Activated T-helper 1 cell treated with anti-CD3 and anti-CD28 coated beads, Interleukin-12 subunit alpha, Interleukin-12 subunit beta, Interleukin-2, Interleukin-4 antibody, amounts not matched to agents 30 ng/mL and 10 ng/mL and 1 ng/mL, durations not matched to agents 14 hours and 24 hours and 36 hours (primary cell): ENCODE measurements at regions of chr12 and their contacts with region 1.

Region 1: GRCh38 chr12:93785262-93786010 is 108.3 kb downstream of the CRADD start:
- DNase-seq: peak; percentile 53
- H3K4me3 Mint-ChIP-seq: peak overlapping the region; percentile 67
- H3K27ac Mint-ChIP-seq: peak overlapping the region; percentile 82
- H3K4me1 Mint-ChIP-seq: peaks cover 51% of the 10 kb centered on the region
- H3K27me3 Mint-ChIP-seq: no peaks in the 10 kb centered on the region

Region 2: DNA sequence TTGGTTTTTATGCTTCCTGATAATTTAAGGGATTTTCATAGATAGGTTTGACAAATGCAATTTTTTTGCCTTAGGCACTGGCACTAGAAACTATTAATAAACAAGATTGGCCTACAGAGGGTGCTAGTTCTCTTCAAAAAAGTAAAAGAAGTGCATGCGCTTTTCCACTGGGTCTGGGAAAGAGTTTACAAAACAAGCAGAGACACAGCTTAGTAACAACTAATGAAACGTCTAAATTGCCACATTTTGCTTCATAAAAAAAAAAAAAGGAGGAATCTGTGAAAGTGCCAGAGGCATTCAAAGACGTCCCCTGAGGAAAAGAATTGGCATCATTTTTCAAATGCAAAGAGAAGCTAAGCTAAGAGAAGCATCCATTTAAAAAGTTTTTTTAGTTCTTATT is 798.1 kb before region 1 on chr12:
- intact Hi-C with region 1: loop called (anchors 5 kb)
- DNase-seq: no peak
- H3K4me3 Mint-ChIP-seq: no peak overlapping the region
- H3K27ac Mint-ChIP-seq: peak overlapping the region; percentile 79
- H3K4me1 Mint-ChIP-seq: peaks cover 30% of the 10 kb centered on the region
- H3K27me3 Mint-ChIP-seq: no peaks in the 10 kb centered on the region

Region 3: DNA sequence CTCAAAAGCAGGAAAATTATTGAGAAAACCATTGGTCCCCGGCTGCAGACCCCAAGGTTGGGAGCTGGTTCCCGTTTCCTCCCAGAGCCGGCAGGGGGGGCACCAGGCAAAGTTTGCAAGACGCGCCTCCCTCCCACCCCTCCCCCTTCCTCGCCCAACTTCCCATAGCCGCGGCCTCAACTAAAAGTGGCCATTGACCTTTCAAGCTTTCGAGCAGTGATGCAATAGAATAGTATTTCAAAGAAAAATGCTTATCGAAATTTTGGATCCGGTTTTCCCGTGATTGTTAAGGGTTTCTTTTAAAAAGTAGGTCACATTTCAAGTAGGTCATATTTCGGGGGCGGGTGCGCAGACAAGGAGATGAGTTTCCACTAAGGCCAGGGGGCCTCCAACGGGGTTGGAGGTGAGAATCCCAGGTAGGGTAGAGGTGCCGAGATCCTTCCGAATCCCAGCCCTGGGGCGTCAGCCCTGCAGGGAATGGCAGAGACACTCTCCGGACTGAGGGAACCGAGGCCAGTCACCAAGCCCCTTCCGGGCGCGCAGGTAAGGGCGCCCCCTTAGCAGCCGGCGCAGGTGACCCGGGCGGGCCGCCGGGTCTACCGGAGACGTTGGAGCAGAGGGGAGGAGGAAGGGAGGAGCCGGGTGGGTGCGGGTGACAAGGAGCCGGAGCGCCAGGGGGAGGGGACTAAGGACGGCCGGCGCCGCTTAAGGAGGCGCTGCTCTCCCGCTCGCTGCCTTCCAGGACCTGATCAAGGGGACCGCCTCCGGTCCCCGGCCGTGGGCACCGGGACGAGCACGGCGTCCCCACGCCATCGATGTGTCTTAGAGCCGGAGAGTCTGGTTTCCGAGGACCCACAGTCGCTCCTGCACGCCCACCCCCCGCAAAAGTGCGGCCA is 215.5 kb before region 1 on chr12:
- intact Hi-C with region 1: loop called (anchors 1 kb)
- DNase-seq: peak; percentile 68
- H3K4me3 Mint-ChIP-seq: peak overlapping the region; percentile 88
- H3K27ac Mint-ChIP-seq: peak overlapping the region; percentile 77
- H3K4me1 Mint-ChIP-seq: peaks cover 42% of the 10 kb centered on the region
- H3K27me3 Mint-ChIP-seq: peaks cover 15% of the 10 kb centered on the region

Region 4: GRCh38 chr12:93668919-93669418 is 116.5 kb before region 1 on chr12:
- intact Hi-C with region 1: no loop called
- DNase-seq: no peak
- H3K4me3 Mint-ChIP-seq: no peak overlapping the region
- H3K27ac Mint-ChIP-seq: no peak overlapping the region
- H3K4me1 Mint-ChIP-seq: peaks cover 8% of the 10 kb centered on the region
- H3K27me3 Mint-ChIP-seq: no peaks in the 10 kb centered on the region

Region 5: DNA sequence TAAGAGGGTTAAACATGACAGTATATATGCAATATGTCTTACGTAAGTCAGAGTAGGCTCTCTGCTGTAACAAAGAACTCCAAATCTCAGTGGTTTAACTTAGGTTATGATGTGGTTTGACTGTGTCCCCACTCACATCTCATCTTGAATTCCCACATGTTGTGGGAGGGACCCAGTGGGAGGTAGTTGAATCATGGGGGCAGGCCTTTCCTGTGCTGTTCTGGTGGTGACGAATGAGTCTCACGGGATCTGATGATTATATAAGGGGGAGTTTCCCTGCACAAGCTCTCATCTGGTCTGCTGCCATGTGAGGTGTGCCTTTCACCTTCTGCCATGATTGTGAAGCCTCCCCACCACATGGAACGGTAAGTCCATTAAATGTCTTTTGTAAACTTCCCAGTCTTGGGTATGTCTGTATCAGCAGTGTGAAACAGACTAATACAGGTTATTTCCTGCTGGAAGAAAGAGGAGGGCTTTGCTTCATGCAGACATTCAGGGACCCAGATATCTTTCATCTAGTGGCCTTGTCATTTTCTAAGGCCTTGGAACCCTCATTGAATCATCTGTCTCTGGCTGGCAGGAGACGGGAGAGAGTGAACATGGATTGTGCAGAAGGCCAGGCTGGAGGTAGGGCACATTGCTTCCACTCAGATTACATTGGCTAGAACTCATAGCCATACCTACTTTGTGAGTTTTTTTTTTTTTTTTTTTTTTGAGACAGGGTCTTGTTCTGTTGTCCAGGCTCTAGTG is 12.1 kb before region 1 on chr12:
- intact Hi-C with region 1: loop called (anchors 1 kb)
- DNase-seq: no peak
- H3K4me3 Mint-ChIP-seq: no peak overlapping the region
- H3K27ac Mint-ChIP-seq: no peak overlapping the region
- H3K4me1 Mint-ChIP-seq: peaks cover 46% of the 10 kb centered on the region
- H3K27me3 Mint-ChIP-seq: peaks cover 3% of the 10 kb centered on the region

Region 6: GRCh38 chr12:93879476-93880421 is 94.3 kb after region 1 on chr12:
- intact Hi-C with region 1: loop called (anchors 1 kb)
- DNase-seq: no peak
- H3K4me3 Mint-ChIP-seq: peak overlapping the region; percentile 23
- H3K27ac Mint-ChIP-seq: peak overlapping the region; percentile 95
- H3K4me1 Mint-ChIP-seq: peaks cover 35% of the 10 kb centered on the region
- H3K27me3 Mint-ChIP-seq: no peaks in the 10 kb centered on the region

Region 7: DNA sequence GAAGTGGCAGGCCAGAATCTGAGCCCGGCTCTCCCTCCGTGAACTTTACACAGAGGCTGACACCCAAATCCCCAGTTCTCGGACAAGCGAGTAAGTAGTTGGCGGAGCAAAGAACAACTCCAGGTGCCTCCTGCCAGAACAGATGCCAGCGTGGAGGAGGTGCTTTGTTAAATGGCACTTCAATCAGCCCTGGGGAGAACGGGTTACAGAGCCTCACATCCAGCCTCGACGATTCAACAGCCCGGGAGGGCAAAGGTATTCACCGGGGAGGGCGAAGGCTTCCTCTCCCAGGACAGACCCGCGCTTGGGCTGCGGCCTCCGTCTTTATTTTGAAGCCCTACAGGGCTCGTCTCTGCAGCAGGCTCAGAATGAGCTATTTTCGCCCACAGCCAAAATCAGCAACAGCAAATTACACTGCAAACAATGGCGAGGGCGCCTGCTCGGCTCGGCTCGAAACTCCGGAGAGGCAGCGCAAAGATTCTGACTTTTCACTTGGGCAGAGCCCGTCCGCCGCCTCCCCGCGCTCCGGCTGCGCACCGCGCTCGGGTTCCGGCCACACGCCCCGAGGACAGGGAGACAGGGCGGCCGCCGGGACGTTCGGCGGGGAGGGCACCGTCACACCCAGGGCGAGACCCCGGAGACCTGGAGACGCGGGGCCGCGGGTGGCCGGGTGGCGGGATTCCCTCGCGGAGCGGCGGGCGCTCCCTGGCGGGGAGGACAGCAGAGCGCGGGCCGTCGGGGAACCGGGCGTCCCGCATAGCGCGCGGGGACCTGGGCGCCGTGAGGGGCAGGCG is 864.1 kb after region 1 on chr12:
- intact Hi-C with region 1: loop called (anchors 10 kb)
- DNase-seq: peak; percentile 21
- H3K4me3 Mint-ChIP-seq: peak overlapping the region; percentile 80
- H3K27ac Mint-ChIP-seq: peak overlapping the region; percentile 18
- H3K4me1 Mint-ChIP-seq: peaks cover 11% of the 10 kb centered on the region
- H3K27me3 Mint-ChIP-seq: peaks cover 73% of the 10 kb centered on the region